A549 (cell line): ENCODE measurements at regions of chr17 and their contacts with region 1.

Region 1: DNA sequence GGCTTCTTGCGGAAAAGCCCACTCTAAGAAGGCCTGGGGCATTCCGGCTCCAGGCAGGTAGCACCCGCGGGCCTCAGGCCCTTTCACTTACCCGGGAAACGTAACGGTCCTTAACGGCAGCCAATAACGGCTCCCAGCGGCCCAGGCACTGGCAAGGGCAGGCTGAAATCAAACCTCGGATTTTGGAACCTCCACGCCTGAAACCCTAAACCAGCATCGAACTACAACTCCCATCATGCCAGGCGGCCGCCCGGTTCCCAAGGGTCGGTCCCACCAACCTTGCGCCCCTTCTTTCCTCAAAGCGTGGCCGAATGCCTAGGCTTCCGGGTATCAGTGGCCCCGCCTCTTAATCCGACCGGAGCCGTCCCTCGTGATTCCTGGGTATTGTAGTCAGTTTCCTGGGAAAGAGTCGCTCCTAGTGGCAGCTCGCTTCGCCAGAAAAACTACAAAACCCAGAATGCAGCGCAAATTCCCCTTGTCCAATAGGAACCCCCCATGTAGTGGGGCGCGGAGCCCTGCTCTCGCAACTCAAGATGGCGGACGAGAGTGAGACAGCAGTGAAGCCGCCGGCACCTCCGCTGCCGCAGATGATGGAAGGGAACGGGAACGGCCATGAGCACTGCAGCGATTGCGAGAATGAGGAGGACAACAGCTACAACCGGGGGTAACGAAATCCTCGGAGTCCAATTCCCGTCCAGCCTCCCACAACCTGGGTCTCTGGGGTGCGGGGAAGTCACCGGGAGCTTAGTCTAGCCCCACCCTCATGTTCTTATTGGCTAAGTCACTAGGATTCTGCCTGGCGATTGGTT is at the start of gene NMT1:
- DNase-seq: peak; percentile 99 to 100
- ATAC-seq: peak; percentile 97
- H3K4me3 ChIP-seq: peak within 1 kb of the TSS; percentile 67
- H3K27ac ChIP-seq: peak within 1 kb of the TSS; percentile 87 to 91
- H3K4me1 ChIP-seq: peaks cover 16% of the 10 kb centered on the region
- CTCF ChIP-seq: no peak
- EP300 ChIP-seq: no peak
- POLR2A ChIP-seq: peak; percentile 91
- RAD21 ChIP-seq: no peak
- polyA plus RNA-seq, gene NMT1: 82.9 and 95.8 TPM in 2 replicates

Region 2: DNA sequence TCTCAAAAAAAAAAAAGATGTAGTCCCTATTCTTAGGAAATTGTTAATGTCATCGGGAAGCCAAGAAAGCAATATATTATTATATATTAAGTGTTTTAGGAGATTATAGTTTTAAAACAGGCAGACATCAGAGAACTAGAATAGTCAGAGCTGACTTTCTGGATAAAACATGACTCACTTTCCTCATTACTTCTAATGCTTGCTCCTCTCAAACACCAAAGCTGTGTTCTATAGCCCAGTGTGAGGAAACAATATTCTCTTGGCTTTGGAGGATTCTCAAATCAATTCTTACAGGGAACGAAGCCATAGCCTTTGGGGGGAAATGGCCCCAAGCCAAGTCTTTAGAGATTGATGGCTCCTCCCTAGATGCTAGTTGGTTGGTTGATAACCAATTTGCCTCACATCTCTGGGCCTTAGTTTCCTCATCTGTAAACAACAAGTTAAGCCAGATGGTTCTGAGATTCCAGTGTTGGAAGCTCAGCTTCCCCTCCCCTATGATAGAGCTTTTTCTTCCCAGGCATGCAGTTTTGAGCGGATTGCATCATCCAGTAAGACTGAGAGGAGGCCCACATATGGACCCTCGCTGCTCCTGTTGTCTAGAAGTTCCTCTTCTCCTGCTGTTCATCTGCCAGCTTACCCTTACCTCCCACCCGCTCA is 12.5 kb after region 1 on chr17:
- CTCF ChIA-PET with region 1: interaction called, 8 read pairs
- POLR2A ChIA-PET with region 1: interaction called, 15 read pairs
- DNase-seq: no peak
- ATAC-seq: no peak
- H3K4me3 ChIP-seq: no peak overlapping the region
- H3K27ac ChIP-seq: peak overlapping the region; percentile 32 to 62; a peak in 4 of 6 replicates
- H3K4me1 ChIP-seq: peaks cover 12% of the 10 kb centered on the region; the same call in 2 of the 3 replicates
- CTCF ChIP-seq: no peak
- EP300 ChIP-seq: no peak
- POLR2A ChIP-seq: no peak
- RAD21 ChIP-seq: no peak

Region 3: DNA sequence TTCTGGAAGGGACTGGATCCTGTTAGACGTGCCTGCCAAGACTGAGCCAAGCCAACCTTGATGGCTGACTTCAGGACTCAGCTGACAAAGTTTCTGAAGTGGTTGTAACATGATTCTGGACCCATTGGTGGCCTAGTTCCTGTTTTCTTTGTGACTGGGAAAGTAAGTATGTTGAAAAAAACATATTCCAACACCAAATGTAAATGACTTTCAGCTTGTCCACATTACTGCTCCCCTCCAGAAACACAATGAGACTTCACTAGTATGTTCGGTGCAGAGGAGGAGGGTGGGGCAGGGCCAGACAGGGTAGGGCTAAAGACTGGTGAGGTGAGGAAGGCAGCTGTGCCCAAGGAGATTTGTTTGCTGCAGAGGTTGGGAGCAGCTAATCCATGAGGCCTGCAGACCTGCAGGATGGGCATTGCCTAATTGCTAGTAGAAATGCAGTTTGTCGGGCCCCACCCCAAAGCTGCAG is 26.5 kb after region 1 on chr17:
- CTCF ChIA-PET with region 1: interaction called, 11 read pairs
- POLR2A ChIA-PET with region 1: interaction called, 8 read pairs
- DNase-seq: no peak
- ATAC-seq: no peak
- H3K4me3 ChIP-seq: no peak overlapping the region
- H3K27ac ChIP-seq: no peak overlapping the region
- H3K4me1 ChIP-seq: peaks cover 26% of the 10 kb centered on the region
- CTCF ChIP-seq: no peak
- EP300 ChIP-seq: no peak
- POLR2A ChIP-seq: no peak
- RAD21 ChIP-seq: no peak

Region 4: GRCh38 chr17:45247429-45248131 is 186.6 kb after region 1 on chr17:
- CTCF ChIA-PET with region 1: no interaction called
- POLR2A ChIA-PET with region 1: no interaction called
- DNase-seq: peak; percentile 99 to 100
- ATAC-seq: peak; percentile 79 to 91
- H3K4me3 ChIP-seq: peak overlapping the region; percentile 89
- H3K27ac ChIP-seq: peak overlapping the region; percentile 93 to 96
- H3K4me1 ChIP-seq: peaks cover 49% of the 10 kb centered on the region
- CTCF ChIP-seq: no peak
- EP300 ChIP-seq: peak; percentile 78 to 91; a peak in 3 of 5 replicates
- POLR2A ChIP-seq: peak; percentile 70
- RAD21 ChIP-seq: no peak; a peak in 1 of 5 replicates